ENCODE measurements at regions of chr4 and their contacts with region 1.

Region 1: GRCh38 chr4:75895744-75896314 is 6.4 kb downstream of the PPEF2 start:
- DNase-seq: no peak
- H3K4me3 ChIP-seq: no peak overlapping the region
- CTCF ChIP-seq: peak; percentile 49

Region 2: DNA sequence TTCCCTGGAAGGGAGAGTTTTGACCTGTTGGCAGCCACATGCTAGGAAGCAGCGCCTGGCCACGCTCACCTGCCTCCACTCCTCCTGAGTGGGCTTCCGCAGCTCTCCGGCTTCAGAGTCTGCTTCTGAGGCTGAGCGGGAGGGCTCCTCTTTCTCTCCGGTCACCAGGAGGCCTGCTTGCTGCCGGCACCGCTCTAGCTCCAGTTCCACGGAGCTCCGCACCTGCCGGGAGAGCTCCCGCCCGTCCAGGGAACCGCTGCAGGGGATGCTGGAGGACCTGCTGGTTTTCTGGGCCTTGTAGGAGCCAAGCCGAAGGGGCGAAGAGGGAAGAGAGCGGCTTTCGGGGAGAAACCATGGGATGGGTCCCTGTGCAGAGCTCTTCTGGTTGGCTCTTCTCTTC is 19.6 kb before region 1 on chr4:
- CTCF ChIA-PET with region 1: interaction called, 32 read pairs
- POLR2A ChIA-PET with region 1: no interaction called
- DNase-seq: no peak
- H3K4me3 ChIP-seq: no peak overlapping the region
- CTCF ChIP-seq: no peak

Region 3: DNA sequence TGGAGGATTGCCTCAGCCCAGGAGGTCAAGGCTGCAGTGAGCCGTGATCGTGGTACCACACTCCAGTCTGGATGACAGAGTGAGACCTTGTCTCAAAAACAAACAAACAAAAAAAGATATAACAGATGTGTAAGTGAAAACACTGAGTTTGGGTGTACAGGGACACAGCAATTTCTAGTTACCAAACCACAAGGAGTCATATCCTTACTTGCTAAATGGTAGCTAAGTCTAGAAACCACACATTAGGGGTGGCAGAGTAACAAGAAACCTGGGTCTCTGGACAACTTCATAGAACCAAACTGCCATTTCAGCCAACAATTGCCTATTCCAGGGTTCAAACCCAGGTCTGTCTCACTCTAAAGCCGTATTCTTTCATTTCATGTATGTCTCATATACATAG is 14.4 kb before region 1 on chr4:
- CTCF ChIA-PET with region 1: interaction called, 32 read pairs
- POLR2A ChIA-PET with region 1: no interaction called
- DNase-seq: no peak
- H3K4me3 ChIP-seq: no peak overlapping the region
- CTCF ChIP-seq: no peak

Measured in AG04449 (cell line).